ENCODE measurements at regions of chr1 and their contacts with region 1.

Region 1: GRCh38 chr1:206612129-206612876 is at the start of gene EIF2D:
- DNase-seq: peak; percentile 95
- ATAC-seq: peak; percentile 98
- H3K4me3 Mint-ChIP-seq: peak within 1 kb of the TSS; percentile 94
- H3K27ac Mint-ChIP-seq: peak within 1 kb of the TSS; percentile 90
- H3K4me1 Mint-ChIP-seq: peaks cover 35% of the 10 kb centered on the region
- H3K27me3 Mint-ChIP-seq: peaks cover 10% of the 10 kb centered on the region
- total RNA-seq, gene EIF2D: 41.6 to 45.1 TPM

Region 2: GRCh38 chr1:206534552-206534951 is 77.8 kb before region 1 on chr1:
- CTCF ChIA-PET with region 1: no interaction called
- POLR2A ChIA-PET with region 1: no interaction called
- DNase-seq: no peak
- ATAC-seq: no peak
- H3K4me3 Mint-ChIP-seq: no peak overlapping the region
- H3K27ac Mint-ChIP-seq: no peak overlapping the region
- H3K4me1 Mint-ChIP-seq: no peaks in the 10 kb centered on the region
- H3K27me3 Mint-ChIP-seq: no peaks in the 10 kb centered on the region

Region 3: GRCh38 chr1:206551986-206552326 is 60.3 kb before region 1 on chr1:
- CTCF ChIA-PET with region 1: interaction called, 42 read pairs
- POLR2A ChIA-PET with region 1: interaction called, 3 read pairs
- DNase-seq: peak; percentile 91
- ATAC-seq: peak; percentile 84
- H3K4me3 Mint-ChIP-seq: peak overlapping the region; percentile 76
- H3K27ac Mint-ChIP-seq: peak overlapping the region; percentile 97
- H3K4me1 Mint-ChIP-seq: peaks cover 65% of the 10 kb centered on the region
- H3K27me3 Mint-ChIP-seq: no peaks in the 10 kb centered on the region

Region 4: DNA sequence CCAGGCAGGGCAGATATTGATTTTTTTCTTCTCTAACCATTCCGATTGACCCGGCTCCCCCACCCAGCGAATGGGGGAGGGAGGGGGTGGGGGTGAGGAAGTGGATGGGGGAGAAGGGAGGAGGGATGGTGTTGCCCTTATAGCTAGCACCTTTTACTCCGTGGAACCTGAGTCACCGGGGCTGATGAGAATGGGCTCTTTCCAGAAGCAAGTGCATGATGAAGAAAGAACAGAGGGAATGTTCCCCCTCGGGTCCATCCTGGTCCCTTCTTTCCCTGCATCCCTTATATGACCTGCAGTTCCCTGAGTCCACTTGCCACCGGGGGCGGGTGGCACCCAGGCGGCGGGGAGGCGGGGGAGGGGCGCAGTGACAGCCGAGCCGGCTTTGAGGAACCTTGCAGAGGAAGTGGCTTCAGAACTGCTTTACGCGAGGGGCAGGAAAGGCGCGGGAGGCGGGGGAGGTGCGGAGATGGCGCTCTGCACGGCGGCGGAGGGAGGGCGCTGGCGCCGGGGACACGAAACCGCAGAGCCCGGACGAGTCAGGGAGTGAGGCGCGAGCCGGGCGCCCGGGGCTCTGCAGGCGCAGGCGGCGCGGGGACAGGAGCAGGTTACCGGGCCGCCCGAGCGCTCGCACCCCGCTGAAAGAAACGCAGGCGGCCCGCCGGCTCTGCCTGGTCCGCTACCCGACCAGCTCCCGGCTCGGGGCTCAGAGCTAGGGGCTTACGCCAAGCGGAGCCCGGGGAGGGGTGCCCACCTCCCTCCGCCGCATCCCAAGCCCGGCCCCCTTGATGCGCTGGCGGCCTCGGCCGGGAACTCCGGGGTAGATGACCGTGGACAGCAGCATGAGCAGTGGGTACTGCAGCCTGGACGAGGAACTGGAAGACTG is 55.3 kb before region 1 on chr1:
- CTCF ChIA-PET with region 1: interaction called, 14 read pairs
- POLR2A ChIA-PET with region 1: interaction called, 3 read pairs
- DNase-seq: peak; percentile 95
- ATAC-seq: peak; percentile 71
- H3K4me3 Mint-ChIP-seq: peak overlapping the region; percentile 86
- H3K27ac Mint-ChIP-seq: peak overlapping the region; percentile 82
- H3K4me1 Mint-ChIP-seq: peaks cover 67% of the 10 kb centered on the region
- H3K27me3 Mint-ChIP-seq: no peaks in the 10 kb centered on the region

Region 5: DNA sequence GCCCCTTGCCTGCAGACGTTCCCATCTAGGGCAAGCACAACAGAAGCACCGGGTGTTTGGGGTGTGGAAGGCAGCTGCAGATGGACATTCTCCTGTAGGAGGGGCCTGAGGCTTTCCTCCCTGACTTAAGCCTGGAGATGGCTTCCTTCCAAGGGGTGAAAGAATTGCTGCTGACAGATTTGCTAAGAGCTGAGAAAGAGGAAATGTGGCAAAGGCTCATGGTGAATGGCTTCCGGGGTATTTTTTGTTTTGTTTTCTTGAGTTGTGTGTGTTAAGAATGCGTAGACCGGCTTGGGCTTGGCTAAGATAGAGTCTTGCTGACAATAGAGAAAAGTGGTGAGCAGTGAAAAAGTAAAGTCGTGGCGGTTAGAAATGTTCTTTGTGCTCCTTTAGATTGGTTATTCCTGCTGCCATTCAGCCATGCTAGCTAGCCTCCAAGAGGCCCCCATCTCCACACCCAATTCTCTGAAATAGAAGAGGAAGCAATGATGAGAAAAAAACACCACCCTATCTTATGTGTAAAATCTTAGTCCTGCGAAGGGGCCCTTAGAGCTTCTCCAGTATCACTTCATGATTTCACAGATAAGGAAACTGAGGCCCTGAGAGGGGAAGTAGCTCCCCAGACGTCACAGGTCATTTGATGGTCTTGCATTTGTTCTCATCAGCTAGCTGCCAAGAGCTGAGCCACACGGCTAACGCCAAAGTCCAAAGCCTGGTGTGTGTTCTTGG is 37.0 kb before region 1 on chr1:
- CTCF ChIA-PET with region 1: interaction called, 11 read pairs
- POLR2A ChIA-PET with region 1: interaction called, 3 read pairs
- DNase-seq: peak; percentile 76
- ATAC-seq: peak; percentile 57
- H3K4me3 Mint-ChIP-seq: peak overlapping the region; percentile 62
- H3K27ac Mint-ChIP-seq: peak overlapping the region; percentile 91
- H3K4me1 Mint-ChIP-seq: peaks cover 99% of the 10 kb centered on the region
- H3K27me3 Mint-ChIP-seq: no peaks in the 10 kb centered on the region

Region 6: GRCh38 chr1:206635080-206635977 is 23.0 kb after region 1 on chr1 and contains the start of gene DYRK3:
- CTCF ChIA-PET with region 1: interaction called, 75 read pairs
- POLR2A ChIA-PET with region 1: interaction called, 7 read pairs
- DNase-seq: peak; percentile 95
- ATAC-seq: peak; percentile 95
- H3K4me3 Mint-ChIP-seq: peak within 1 kb of the TSS; percentile 80
- H3K27ac Mint-ChIP-seq: peak within 1 kb of the TSS; percentile 83
- H3K4me1 Mint-ChIP-seq: peaks cover 27% of the 10 kb centered on the region
- H3K27me3 Mint-ChIP-seq: peaks cover 17% of the 10 kb centered on the region
- total RNA-seq, gene DYRK3: 5.3 to 5.9 TPM

Measured in activated CD8-positive, alpha-beta T cell treated with anti-CD3 and anti-CD28 coated beads, Interleukin-2, amount 10 ng/mL, durations not matched to agents 7 days and 5 days (primary cell).